Activated T-helper 2 cell treated with anti-CD3 and anti-CD28 coated beads, Interferon-gamma antibody, Interleukin-2, Interleukin-4, amounts not matched to agents 10 μg/mL and 5 μg/mL and 100 μg/mL, durations not matched to agents 14 hours and 24 hours and 36 hours (primary cell): ENCODE measurements at regions of chr12 and their contacts with region 1.

Region 1: DNA sequence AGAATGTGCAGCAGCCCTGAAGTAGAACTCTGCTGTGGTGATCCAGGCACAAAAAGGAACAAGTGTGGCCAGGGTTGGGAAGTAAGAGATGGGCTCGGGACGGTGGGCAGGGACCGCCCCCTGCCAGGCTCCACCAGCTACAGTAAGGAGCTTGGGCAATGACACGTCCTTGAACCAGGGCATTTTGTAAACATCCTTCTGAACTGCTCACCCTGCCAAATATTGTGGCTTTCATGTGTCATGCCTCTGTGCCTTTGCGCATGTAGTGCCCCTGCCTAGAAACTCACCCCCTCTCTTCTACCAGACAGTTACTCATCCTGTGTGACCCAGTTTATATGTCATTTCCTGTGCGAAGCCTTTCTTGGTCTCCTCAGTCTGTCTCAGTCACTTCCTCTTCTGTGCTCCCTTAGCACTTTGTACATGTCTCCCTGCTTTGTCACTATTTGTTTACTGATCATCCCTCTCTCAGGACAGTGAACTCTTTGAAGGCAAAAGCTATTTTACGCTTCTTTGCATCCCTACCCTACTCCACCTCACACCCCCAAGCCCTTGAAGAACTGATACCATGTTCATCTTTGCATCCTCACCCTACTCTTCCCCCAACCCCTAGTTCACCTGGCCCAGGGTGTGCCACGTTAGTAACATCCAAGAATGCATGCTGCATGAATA is 108.9 kb upstream of the PLEKHG7 start:
- DNase-seq: peak; percentile 66
- H3K4me3 Mint-ChIP-seq: peak overlapping the region; percentile 19
- H3K27ac Mint-ChIP-seq: peak overlapping the region; percentile 94
- H3K4me1 Mint-ChIP-seq: peaks cover 60% of the 10 kb centered on the region
- H3K27me3 Mint-ChIP-seq: no peaks in the 10 kb centered on the region

Region 2: GRCh38 chr12:92208613-92209121 is 385.2 kb before region 1 on chr12:
- intact Hi-C with region 1: loop called (anchors 5 kb)
- DNase-seq: peak; percentile 19
- H3K4me3 Mint-ChIP-seq: peak overlapping the region; percentile 22
- H3K27ac Mint-ChIP-seq: peak overlapping the region; percentile 24
- H3K4me1 Mint-ChIP-seq: peaks cover 37% of the 10 kb centered on the region
- H3K27me3 Mint-ChIP-seq: no peaks in the 10 kb centered on the region

Region 3: GRCh38 chr12:92341065-92341668 is 252.7 kb before region 1 on chr12:
- intact Hi-C with region 1: no loop called
- DNase-seq: no peak
- H3K4me3 Mint-ChIP-seq: peak overlapping the region; percentile 52
- H3K27ac Mint-ChIP-seq: no peak overlapping the region
- H3K4me1 Mint-ChIP-seq: peaks cover 14% of the 10 kb centered on the region
- H3K27me3 Mint-ChIP-seq: no peaks in the 10 kb centered on the region

Region 4: GRCh38 chr12:92539113-92539749 is 54.6 kb before region 1 on chr12:
- intact Hi-C with region 1: loop called (anchors 2 kb)
- DNase-seq: no peak
- H3K4me3 Mint-ChIP-seq: no peak overlapping the region
- H3K27ac Mint-ChIP-seq: peak overlapping the region; percentile 93
- H3K4me1 Mint-ChIP-seq: peaks cover 60% of the 10 kb centered on the region
- H3K27me3 Mint-ChIP-seq: no peaks in the 10 kb centered on the region

Region 5: DNA sequence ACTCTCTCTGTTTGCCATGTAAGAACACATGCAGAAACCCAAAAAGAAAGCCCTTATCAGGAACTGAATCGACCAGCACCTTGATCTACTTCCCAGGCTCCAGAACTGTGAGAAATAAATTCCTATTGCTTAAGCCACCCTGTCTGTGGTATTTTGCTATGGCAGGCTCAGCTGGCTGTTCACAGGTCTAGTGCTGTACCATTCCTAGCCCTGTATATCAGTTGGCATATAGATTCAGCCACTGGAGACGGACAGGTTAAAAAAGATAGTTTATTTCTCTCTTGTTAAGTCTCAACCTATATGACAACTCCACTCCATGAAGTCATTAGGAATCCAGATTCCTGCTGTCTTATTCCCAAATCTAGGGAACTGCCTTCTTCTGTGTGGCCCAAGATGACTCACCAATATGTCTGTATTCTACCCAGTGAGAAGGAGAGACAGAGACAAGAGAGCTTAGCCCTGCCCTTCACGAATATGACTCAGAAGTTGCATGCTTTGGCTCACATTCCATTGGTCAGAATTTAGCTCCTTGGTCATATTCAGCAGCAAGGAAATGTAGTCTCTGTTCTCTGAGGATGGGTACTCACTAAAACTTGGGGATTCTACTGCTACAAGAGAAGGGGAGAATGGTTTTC is 165.9 kb after region 1 on chr12:
- intact Hi-C with region 1: no loop called
- DNase-seq: no peak
- H3K4me3 Mint-ChIP-seq: no peak overlapping the region
- H3K27ac Mint-ChIP-seq: no peak overlapping the region
- H3K4me1 Mint-ChIP-seq: peaks cover 2% of the 10 kb centered on the region
- H3K27me3 Mint-ChIP-seq: peaks cover 27% of the 10 kb centered on the region